Naive thymus-derived CD4-positive, alpha-beta T cell (primary cell): ENCODE measurements at regions of chr18 and their contacts with region 1.

Region 1: DNA sequence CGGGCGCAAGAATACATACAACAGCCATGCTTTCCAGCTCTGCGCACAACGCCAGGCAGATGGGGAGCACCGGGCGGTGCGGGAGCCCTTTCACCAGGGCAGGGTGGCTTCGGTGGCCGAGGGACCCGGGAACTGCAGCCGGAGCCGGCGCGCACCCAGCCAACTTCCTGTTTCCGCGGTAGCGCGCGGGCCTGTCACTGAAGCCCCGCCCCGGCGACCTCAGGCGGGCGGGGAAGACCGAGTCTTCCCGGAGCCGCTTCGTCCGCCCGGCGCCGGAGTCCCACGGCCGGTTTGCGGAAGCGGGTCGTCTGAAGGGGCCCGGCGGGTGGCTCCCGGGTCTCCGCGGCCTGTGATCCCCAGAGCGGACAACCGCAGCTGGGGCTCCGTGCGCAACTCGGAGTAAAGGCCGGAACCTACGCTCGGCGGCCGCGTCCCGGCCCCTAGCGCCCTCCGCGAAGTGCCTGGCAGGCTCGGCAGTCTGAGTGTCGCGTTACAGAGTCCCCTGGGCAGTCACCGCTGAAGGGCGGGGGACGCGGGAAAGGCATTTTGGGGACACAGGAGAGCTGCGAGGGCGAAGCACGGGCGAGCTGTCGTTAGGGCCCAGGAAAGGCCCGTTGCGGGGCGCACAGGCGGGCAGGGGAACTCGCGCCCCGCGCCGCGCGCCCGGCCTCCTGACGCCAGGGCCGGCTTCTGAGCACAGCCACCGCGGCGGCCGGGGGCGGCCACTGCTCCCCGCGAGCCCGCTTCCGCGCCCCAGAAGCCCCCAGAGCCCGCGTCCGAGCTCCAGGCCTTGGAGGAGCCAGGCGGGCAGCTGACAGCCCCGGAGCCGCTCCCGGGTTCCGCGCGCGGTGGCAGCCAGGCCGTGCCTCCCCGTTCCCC is at the start of gene MPPE1:
- DNase-seq: peak; percentile 77 to 88 (median 83)
- ATAC-seq: peak; percentile 95
- H3K4me3 ChIP-seq: peak within 1 kb of the TSS; percentile 94
- H3K4me3 Mint-ChIP-seq: peak within 1 kb of the TSS; percentile 90 to 97 (median 96)
- H3K27ac ChIP-seq: peak within 1 kb of the TSS; percentile 97
- H3K27ac Mint-ChIP-seq: peak within 1 kb of the TSS; percentile 93 to 97 (median 95)
- H3K4me1 ChIP-seq: peaks cover 8 to 9% of the 10 kb centered on the region in 2 donors
- H3K4me1 Mint-ChIP-seq: peaks cover 10 to 32% (median 24%) of the 10 kb centered on the region in 7 donors
- H3K27me3 ChIP-seq: no peaks in the 10 kb centered on the region
- H3K27me3 Mint-ChIP-seq: no peaks in the 10 kb centered on the region
- total RNA-seq, gene MPPE1: 61.9 to 88.0 (median 86.2) TPM

Region 2: DNA sequence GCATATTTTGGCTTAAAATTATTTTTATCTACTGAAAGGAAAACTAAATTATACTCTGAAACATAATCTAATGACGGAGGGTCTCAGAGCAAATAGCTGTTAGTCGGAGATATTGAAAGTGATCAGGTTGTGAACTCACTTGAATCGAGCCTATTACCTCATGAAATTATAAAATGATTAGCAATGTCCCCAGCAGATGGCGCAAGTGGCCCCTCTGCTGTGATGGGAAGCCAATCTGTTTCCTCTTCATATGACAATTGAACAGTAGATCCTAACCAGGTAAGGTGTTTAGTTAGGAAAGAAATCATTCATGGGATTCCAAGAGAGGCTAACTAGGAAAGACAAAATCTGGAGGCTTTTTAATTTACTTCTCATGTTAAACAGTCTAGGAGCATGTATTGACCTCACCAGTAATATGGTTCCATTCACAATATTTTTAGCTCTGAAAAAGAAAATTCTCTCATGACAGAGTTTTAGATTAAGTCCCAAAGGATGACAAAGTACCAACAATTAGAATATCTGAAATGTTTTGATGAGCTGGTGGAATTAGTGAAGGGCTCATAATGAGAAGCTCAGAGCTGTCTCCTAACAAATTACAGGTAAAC is 29.6 kb after region 1 on chr18:
- CTCF ChIA-PET with region 1: no interaction called
- POLR2A ChIA-PET with region 1: no interaction called
- intact Hi-C with region 1: loop called in 1 of 2 experiments (anchors 2 kb)
- DNase-seq: peak; percentile 42 to 79 (median 65)
- ATAC-seq: peak; percentile 83
- H3K4me3 ChIP-seq: no peak overlapping the region
- H3K4me3 Mint-ChIP-seq: no peak overlapping the region
- H3K27ac ChIP-seq: no peak overlapping the region
- H3K27ac Mint-ChIP-seq: no peak overlapping the region
- H3K4me1 ChIP-seq: no peaks in the 10 kb centered on the region
- H3K4me1 Mint-ChIP-seq: peaks cover 0 to 8% (median 0%) of the 10 kb centered on the region in 7 donors
- H3K27me3 ChIP-seq: no peaks in the 10 kb centered on the region
- H3K27me3 Mint-ChIP-seq: peaks cover 0 to 6% (median 0%) of the 10 kb centered on the region in 5 donors

Region 3: DNA sequence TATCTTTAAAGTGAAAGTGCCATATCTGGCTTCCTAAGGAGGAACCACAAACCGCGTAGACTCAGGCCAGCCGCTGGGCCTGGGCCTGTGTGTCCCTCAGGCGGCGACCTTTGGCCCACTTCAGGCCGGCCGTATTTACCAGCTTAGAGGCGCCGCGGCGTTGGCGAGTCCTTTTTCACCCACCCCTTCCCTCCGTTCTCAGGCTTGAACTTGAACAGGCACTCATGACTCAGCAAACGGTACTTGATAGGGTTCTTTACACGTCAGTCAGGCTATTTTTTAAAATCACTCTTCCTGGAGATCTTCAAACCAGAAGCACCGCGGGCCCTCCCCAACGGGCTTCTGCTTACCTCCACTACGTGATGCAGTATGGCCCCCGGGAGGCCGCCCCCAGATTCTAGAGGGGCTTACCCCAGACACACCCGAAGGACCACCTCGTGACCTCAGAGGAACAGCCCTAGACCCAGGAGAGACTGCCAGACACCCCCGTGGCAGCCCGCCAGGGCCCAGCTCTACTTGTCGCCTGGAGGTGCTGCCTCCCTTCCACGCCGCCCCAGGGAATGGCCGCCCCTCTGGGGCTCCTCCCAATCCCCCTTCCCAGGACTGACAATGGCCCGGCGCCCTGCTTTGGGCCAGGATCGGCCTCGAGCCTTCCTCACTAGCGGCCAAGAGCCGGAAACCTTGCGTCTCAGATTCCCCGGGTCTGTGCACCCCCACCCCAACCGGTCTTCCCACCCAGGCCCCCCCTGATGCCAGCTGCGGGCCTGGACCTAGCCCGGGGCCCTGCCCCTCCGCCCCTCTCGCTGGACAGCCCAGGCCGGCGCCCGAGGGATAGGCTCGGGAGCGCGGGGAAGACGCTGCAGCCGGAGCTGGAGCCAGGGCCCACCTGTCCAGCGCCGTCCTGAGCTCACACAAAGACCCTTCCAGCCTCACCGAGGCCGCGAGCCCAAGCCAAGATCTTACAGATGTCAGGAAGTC is 39.1 kb after region 1 on chr18:
- CTCF ChIA-PET with region 1: no interaction called
- POLR2A ChIA-PET with region 1: no interaction called
- intact Hi-C with region 1: loop called (anchors 2 kb)
- DNase-seq: peak; percentile 25 to 71 (median 55)
- ATAC-seq: peak; percentile 90
- H3K4me3 ChIP-seq: peak overlapping the region; percentile 67
- H3K4me3 Mint-ChIP-seq: peak overlapping the region; percentile 82 to 97 (median 88)
- H3K27ac ChIP-seq: peak overlapping the region; percentile 57
- H3K27ac Mint-ChIP-seq: peak overlapping the region; percentile 73 to 97 (median 85)
- H3K4me1 ChIP-seq: peaks cover 0 to 4% of the 10 kb centered on the region in 2 donors
- H3K4me1 Mint-ChIP-seq: peaks cover 4 to 17% (median 10%) of the 10 kb centered on the region in 7 donors
- H3K27me3 ChIP-seq: no peaks in the 10 kb centered on the region
- H3K27me3 Mint-ChIP-seq: no peaks in the 10 kb centered on the region

Region 4: GRCh38 chr18:11995445-11996189 is 87.2 kb after region 1 on chr18:
- CTCF ChIA-PET with region 1: no interaction called
- POLR2A ChIA-PET with region 1: interaction called, 4 read pairs
- intact Hi-C with region 1: loop called in 1 of 2 experiments (anchors 1 kb)
- DNase-seq: peak; percentile 19 to 61 (median 50)
- ATAC-seq: peak; percentile 92
- H3K4me3 ChIP-seq: peak overlapping the region; percentile 3
- H3K4me3 Mint-ChIP-seq: peak overlapping the region; percentile 4 to 74 (median 58)
- H3K27ac ChIP-seq: no peak overlapping the region
- H3K27ac Mint-ChIP-seq: peak overlapping the region in 6 of 9 donors; percentile 4 to 79 (median 52)
- H3K4me1 ChIP-seq: peaks cover 0 to 6% of the 10 kb centered on the region in 2 donors
- H3K4me1 Mint-ChIP-seq: peaks cover 9 to 21% (median 14%) of the 10 kb centered on the region in 7 donors
- H3K27me3 ChIP-seq: no peaks in the 10 kb centered on the region
- H3K27me3 Mint-ChIP-seq: no peaks in the 10 kb centered on the region

Region 5: DNA sequence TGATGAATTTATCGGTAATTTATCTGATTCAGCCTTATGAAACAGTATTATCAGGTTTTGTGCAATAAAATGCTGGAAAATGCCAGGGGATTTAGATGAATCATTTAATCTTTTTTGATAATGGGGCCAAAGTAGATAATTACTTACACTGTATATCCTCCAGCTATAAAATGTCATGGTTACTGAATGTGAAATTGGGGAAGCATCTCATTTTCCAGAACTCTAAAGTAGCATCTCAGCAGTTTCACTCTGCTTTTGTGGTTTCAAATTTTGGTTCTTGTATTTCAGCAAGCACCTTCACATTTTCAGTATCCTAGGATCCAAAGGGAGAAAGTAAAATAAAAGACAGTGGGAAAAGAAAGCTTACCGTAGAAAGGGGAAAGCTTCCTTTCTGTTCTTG is 198.1 kb after region 1 on chr18:
- CTCF ChIA-PET with region 1: no interaction called
- POLR2A ChIA-PET with region 1: no interaction called
- intact Hi-C with region 1: no loop called
- DNase-seq: no peak
- ATAC-seq: no peak
- H3K4me3 ChIP-seq: no peak overlapping the region
- H3K4me3 Mint-ChIP-seq: no peak overlapping the region
- H3K27ac ChIP-seq: no peak overlapping the region
- H3K27ac Mint-ChIP-seq: no peak overlapping the region
- H3K4me1 ChIP-seq: no peaks in the 10 kb centered on the region
- H3K4me1 Mint-ChIP-seq: no peaks in the 10 kb centered on the region
- H3K27me3 ChIP-seq: no peaks in the 10 kb centered on the region
- H3K27me3 Mint-ChIP-seq: peaks cover 22 to 54% (median 36%) of the 10 kb centered on the region in 5 donors

Region 6: GRCh38 chr18:12376718-12377555 is 468.5 kb after region 1 on chr18 and contains the start of gene AFG3L2:
- CTCF ChIA-PET with region 1: no interaction called
- POLR2A ChIA-PET with region 1: interaction called, 3 read pairs
- intact Hi-C with region 1: loop called (anchors 2 to 10 kb)
- DNase-seq: peak; percentile 99 to 100 (median 100)
- ATAC-seq: peak; percentile 93
- H3K4me3 ChIP-seq: peak within 1 kb of the TSS; percentile 93
- H3K4me3 Mint-ChIP-seq: peak within 1 kb of the TSS; percentile 85 to 93 (median 92)
- H3K27ac ChIP-seq: peak within 1 kb of the TSS; percentile 97
- H3K27ac Mint-ChIP-seq: peak within 1 kb of the TSS; percentile 77 to 95 (median 90)
- H3K4me1 ChIP-seq: peaks cover 13 to 28% of the 10 kb centered on the region in 2 donors
- H3K4me1 Mint-ChIP-seq: peaks cover 32 to 52% (median 46%) of the 10 kb centered on the region in 7 donors
- H3K27me3 ChIP-seq: no peaks in the 10 kb centered on the region
- H3K27me3 Mint-ChIP-seq: peaks cover 0 to 22% (median 0%) of the 10 kb centered on the region in 5 donors
- total RNA-seq, gene AFG3L2: 26.3 to 42.3 (median 32.0) TPM

Region 7: GRCh38 chr18:12702221-12703095 is 794.0 kb after region 1 on chr18 and contains the starts of genes CEP76 and PSMG2:
- CTCF ChIA-PET with region 1: no interaction called
- POLR2A ChIA-PET with region 1: no interaction called
- intact Hi-C with region 1: loop called in 1 of 2 experiments (anchors 2 kb)
- DNase-seq: peak; percentile 77 to 88 (median 84)
- ATAC-seq: peak; percentile 89
- H3K4me3 ChIP-seq: peak within 1 kb of the TSS; percentile 97
- H3K4me3 Mint-ChIP-seq: peak within 1 kb of the TSS; percentile 92 to 99 (median 98)
- H3K27ac ChIP-seq: peak within 1 kb of the TSS; percentile 96
- H3K27ac Mint-ChIP-seq: peak within 1 kb of the TSS; percentile 91 to 100 (median 96)
- H3K4me1 ChIP-seq: peaks cover 17 to 20% of the 10 kb centered on the region in 2 donors
- H3K4me1 Mint-ChIP-seq: peaks cover 36 to 63% (median 50%) of the 10 kb centered on the region in 7 donors
- H3K27me3 ChIP-seq: no peaks in the 10 kb centered on the region
- H3K27me3 Mint-ChIP-seq: no peaks in the 10 kb centered on the region
- total RNA-seq, gene CEP76: 6.9 to 13.2 (median 11.1) TPM
- total RNA-seq, gene PSMG2: 49.9 to 104 (median 59.9) TPM